ENCODE measurements at regions of chr5 and their contacts with region 1.

Region 1: DNA sequence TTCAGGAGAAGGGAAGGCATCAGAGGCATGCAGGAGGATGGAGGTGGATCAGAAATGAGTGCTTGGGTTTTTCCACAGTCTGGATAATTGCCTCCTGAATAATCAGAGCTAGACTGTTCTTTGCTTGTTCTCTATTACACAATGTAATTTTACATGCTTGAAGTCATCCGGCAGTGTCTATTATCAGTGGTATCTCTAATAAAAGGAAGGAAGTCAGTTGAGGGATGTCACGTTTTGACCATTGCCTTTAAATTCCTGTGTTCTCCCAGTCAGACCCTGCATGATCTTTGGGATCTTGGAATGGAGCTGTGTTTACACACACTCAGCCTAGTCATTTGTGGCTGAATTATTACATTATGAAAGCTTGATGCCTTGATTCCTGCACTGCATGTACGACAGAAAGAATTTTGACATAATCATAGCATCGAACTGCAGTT is 91.0 kb downstream of the PDE8B start:
- DNase-seq: no peak
- H3K4me3 ChIP-seq: no peak overlapping the region
- H3K27ac ChIP-seq: peak overlapping the region in 1 of 4 donors; percentile 22
- H3K4me1 ChIP-seq: peaks cover 0 to 13% (median 3%) of the 10 kb centered on the region in 4 donors
- H3K27me3 ChIP-seq: no peaks in the 10 kb centered on the region
- CTCF ChIP-seq: no peak
- EP300 ChIP-seq: no peak
- POLR2A ChIP-seq: no peak

Region 2: DNA sequence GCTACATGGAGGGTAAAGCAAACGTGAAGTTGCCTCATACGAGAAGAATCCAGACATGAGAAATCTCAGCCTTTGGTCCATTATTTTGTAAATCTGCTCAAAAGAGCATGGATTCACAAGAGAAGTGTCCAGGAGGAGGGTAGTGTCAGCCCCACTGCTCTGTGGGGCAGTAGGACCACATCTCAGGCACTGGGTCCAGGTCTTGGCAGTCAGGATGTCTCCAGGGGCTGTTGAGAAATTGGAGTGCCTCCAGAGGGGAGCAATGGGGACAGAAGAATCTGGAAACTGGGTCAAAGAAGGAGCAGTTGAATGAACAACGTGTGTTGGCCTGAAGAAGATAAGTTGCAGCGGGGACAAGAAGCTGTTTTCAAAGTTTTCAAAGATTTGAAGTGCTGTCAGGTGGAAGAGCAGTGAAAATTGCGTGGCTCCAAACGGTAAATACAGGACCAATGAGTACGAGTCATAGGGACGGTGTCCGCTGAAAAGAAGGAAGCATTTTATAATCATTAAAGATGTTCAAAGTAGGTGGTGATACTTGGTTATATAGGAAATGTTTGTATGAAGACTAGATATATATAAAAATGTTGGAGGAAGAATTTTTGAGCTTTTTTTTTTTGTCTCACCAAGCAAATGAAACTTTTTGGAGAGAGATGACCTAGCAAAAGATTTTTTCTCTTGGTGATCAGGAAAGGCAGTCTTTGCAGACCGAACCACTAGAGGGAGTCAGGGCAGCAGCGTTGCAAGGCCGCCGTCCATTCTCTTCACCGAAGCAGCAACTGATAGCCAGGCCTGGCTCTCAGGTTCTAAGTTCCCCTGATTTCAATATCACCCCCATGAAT is 157.2 kb before region 1 on chr5:
- in situ Hi-C with region 1: no loop called
- intact Hi-C with region 1: no loop called
- DNase-seq: peak; percentile 71
- H3K4me3 ChIP-seq: no peak overlapping the region
- H3K27ac ChIP-seq: no peak overlapping the region
- H3K4me1 ChIP-seq: no peaks in the 10 kb centered on the region
- H3K27me3 ChIP-seq: no peaks in the 10 kb centered on the region
- CTCF ChIP-seq: peak; percentile 67 to 79 (median 77)
- EP300 ChIP-seq: no peak
- POLR2A ChIP-seq: no peak

Region 3: GRCh38 chr5:77337686-77338085 is 36.2 kb after region 1 on chr5:
- in situ Hi-C with region 1: no loop called
- intact Hi-C with region 1: loop called (anchors 1 kb)
- DNase-seq: no peak
- H3K4me3 ChIP-seq: no peak overlapping the region
- H3K27ac ChIP-seq: no peak overlapping the region
- H3K4me1 ChIP-seq: peaks cover 0 to 10% (median 0%) of the 10 kb centered on the region in 4 donors
- H3K27me3 ChIP-seq: no peaks in the 10 kb centered on the region
- CTCF ChIP-seq: no peak
- EP300 ChIP-seq: no peak
- POLR2A ChIP-seq: no peak

Region 4: DNA sequence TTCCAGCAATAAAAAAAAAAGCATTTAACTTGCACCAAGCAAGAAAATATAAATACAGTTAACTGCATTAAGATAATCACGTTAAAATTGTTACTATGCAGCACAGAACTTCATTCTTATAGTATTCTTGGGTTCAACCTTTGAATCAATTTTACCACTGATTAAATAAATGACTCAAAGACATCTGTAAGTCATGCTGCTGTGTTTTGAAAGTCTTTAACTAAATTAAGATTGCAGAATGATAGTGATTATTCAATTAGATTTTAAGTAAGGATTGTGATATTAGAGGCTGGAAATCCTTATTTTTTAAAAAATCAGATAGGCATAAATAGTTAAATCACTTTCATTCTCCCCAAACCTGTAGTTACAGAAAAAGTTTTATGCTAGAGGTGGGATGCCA is 1175.3 kb after region 1 on chr5:
- in situ Hi-C with region 1: no loop called
- intact Hi-C with region 1: loop called (anchors 5 kb)
- DNase-seq: no peak
- H3K4me3 ChIP-seq: no peak overlapping the region
- H3K27ac ChIP-seq: no peak overlapping the region
- H3K4me1 ChIP-seq: no peaks in the 10 kb centered on the region
- H3K27me3 ChIP-seq: no peaks in the 10 kb centered on the region
- CTCF ChIP-seq: no peak
- EP300 ChIP-seq: no peak
- POLR2A ChIP-seq: no peak

Measured in transverse colon (tissue), 4 donors.